Heart left ventricle (tissue), 16 donors: ENCODE measurements at regions of chr1 and their contacts with region 1.

Region 1: GRCh38 chr1:185895208-185895900 is 161.2 kb downstream of the HMCN1 start:
- DNase-seq: no peak
- ATAC-seq: peak in 1 of 4 donors; percentile 29
- H3K4me3 ChIP-seq: no peak overlapping the region
- H3K27ac ChIP-seq: peak overlapping the region in 2 of 12 donors; percentile 2 to 19
- H3K4me1 ChIP-seq: peaks cover 0 to 2% (median 0%) of the 10 kb centered on the region in 12 donors
- H3K27me3 ChIP-seq: no peaks in the 10 kb centered on the region
- CTCF ChIP-seq: no peak
- POLR2A ChIP-seq: no peak

Region 2: GRCh38 chr1:186102557-186103148 is 207.3 kb after region 1 on chr1:
- intact Hi-C with region 1: loop called in 1 of 10 experiments (anchors 5 kb)
- DNase-seq: peak in 4 of 5 donors; percentile 21 to 30 (median 26)
- ATAC-seq: peak in 3 of 4 donors; percentile 66 to 89 (median 87)
- H3K4me3 ChIP-seq: no peak overlapping the region
- H3K27ac ChIP-seq: peak overlapping the region in 11 of 12 donors; percentile 1 to 66 (median 26)
- H3K4me1 ChIP-seq: peaks cover 0 to 20% (median 3%) of the 10 kb centered on the region in 12 donors
- H3K27me3 ChIP-seq: no peaks in the 10 kb centered on the region
- CTCF ChIP-seq: no peak
- POLR2A ChIP-seq: no peak